B cell (primary cell): ENCODE measurements at regions of chr4 and their contacts with region 1.

Region 1: DNA sequence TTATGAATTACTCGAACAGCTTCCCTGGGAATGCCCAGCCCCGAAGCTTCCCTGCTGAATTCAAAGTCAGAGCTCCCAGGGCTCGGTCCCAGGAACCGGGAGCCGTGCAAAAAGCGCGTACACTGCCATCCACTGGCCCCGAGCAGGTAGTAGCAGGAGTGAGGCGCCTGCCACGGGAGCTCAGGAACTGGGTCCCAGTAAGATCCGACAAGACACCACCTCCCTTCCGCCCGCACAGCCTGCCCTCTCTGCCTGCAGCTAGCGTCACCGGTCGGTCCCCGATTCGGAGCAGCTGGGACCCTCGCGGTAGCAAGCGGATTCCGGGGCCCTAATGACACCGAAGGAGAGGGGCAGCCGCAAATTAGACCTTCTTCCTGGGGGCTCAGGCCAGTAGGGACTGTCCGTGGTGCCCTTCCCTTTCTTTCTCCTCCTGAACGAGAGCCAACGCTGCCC is 1.2 kb downstream of the CORIN start:
- DNase-seq: peak; percentile 49
- ATAC-seq: peak; percentile 44
- H3K4me3 ChIP-seq: peak overlapping the region; percentile 44 to 73 (median 56)
- H3K4me3 Mint-ChIP-seq: peak overlapping the region; percentile 90
- H3K27ac ChIP-seq: no peak overlapping the region
- H3K27ac Mint-ChIP-seq: no peak overlapping the region
- H3K4me1 ChIP-seq: peaks cover 26 to 28% of the 10 kb centered on the region in 2 donors
- H3K4me1 Mint-ChIP-seq: peaks cover 32% of the 10 kb centered on the region
- H3K27me3 ChIP-seq: peaks cover 0 to 32% (median 21%) of the 10 kb centered on the region in 4 experiments
- H3K27me3 Mint-ChIP-seq: peaks cover 37% of the 10 kb centered on the region
- CTCF ChIP-seq: peak; percentile 31

Region 2: GRCh38 chr4:47668810-47669408 is 167.8 kb before region 1 on chr4:
- CTCF ChIA-PET with region 1: interaction called, 9 read pairs
- POLR2A ChIA-PET with region 1: no interaction called
- intact Hi-C with region 1: loop called (anchors 5 kb)
- DNase-seq: peak; percentile 54
- ATAC-seq: no peak
- H3K4me3 ChIP-seq: no peak overlapping the region
- H3K4me3 Mint-ChIP-seq: no peak overlapping the region
- H3K27ac ChIP-seq: no peak overlapping the region
- H3K27ac Mint-ChIP-seq: no peak overlapping the region
- H3K4me1 ChIP-seq: no peaks in the 10 kb centered on the region
- H3K4me1 Mint-ChIP-seq: peaks cover 2% of the 10 kb centered on the region
- H3K27me3 ChIP-seq: peaks cover 0 to 3% (median 0%) of the 10 kb centered on the region in 4 experiments
- H3K27me3 Mint-ChIP-seq: peaks cover 32% of the 10 kb centered on the region
- CTCF ChIP-seq: peak; percentile 81

Region 3: GRCh38 chr4:47686294-47686872 is 150.3 kb before region 1 on chr4:
- CTCF ChIA-PET with region 1: interaction called, 5 read pairs
- POLR2A ChIA-PET with region 1: no interaction called
- intact Hi-C with region 1: loop called (anchors 5 kb)
- DNase-seq: peak; percentile 64
- ATAC-seq: peak; percentile 36
- H3K4me3 ChIP-seq: no peak overlapping the region
- H3K4me3 Mint-ChIP-seq: no peak overlapping the region
- H3K27ac ChIP-seq: no peak overlapping the region
- H3K27ac Mint-ChIP-seq: no peak overlapping the region
- H3K4me1 ChIP-seq: no peaks in the 10 kb centered on the region
- H3K4me1 Mint-ChIP-seq: no peaks in the 10 kb centered on the region
- H3K27me3 ChIP-seq: peaks cover 0 to 1% (median 0%) of the 10 kb centered on the region in 4 experiments
- H3K27me3 Mint-ChIP-seq: peaks cover 18% of the 10 kb centered on the region
- CTCF ChIP-seq: peak; percentile 76